ENCODE measurements at regions of chr1 and their contacts with region 1.

Region 1: GRCh38 chr1:246002725-246003441 is 504.2 kb downstream of the SMYD3 start:
- DNase-seq: peak; percentile 93
- ATAC-seq: peak; percentile 74
- H3K4me3 Mint-ChIP-seq: no peak overlapping the region
- H3K27ac Mint-ChIP-seq: no peak overlapping the region
- H3K4me1 Mint-ChIP-seq: no peaks in the 10 kb centered on the region
- H3K27me3 Mint-ChIP-seq: no peaks in the 10 kb centered on the region
- CTCF ChIP-seq: peak; percentile 88

Region 2: GRCh38 chr1:245888809-245889208 is 114.1 kb before region 1 on chr1:
- CTCF ChIA-PET with region 1: interaction called, 5 read pairs
- POLR2A ChIA-PET with region 1: no interaction called
- intact Hi-C with region 1: loop called (anchors 10 kb)
- DNase-seq: peak; percentile 11
- ATAC-seq: no peak
- H3K4me3 Mint-ChIP-seq: no peak overlapping the region
- H3K27ac Mint-ChIP-seq: no peak overlapping the region
- H3K4me1 Mint-ChIP-seq: no peaks in the 10 kb centered on the region
- H3K27me3 Mint-ChIP-seq: no peaks in the 10 kb centered on the region
- CTCF ChIP-seq: peak; percentile 39

Region 3: GRCh38 chr1:246450611-246451251 is 447.8 kb after region 1 on chr1:
- CTCF ChIA-PET with region 1: interaction called, 3 read pairs
- POLR2A ChIA-PET with region 1: no interaction called
- intact Hi-C with region 1: loop called (anchors 5 kb)
- DNase-seq: no peak
- ATAC-seq: peak; percentile 51
- H3K4me3 Mint-ChIP-seq: no peak overlapping the region
- H3K27ac Mint-ChIP-seq: no peak overlapping the region
- H3K4me1 Mint-ChIP-seq: peaks cover 7% of the 10 kb centered on the region
- H3K27me3 Mint-ChIP-seq: no peaks in the 10 kb centered on the region
- CTCF ChIP-seq: peak; percentile 69

Measured in activated CD8-positive, alpha-beta T cell treated with anti-CD3 and anti-CD28 coated beads for 36 hours (primary cell).